ENCODE measurements at regions of chr5 and their contacts with region 1.

Region 1: GRCh38 chr5:132466433-132467286 is 23.9 kb downstream of the IRF1 start:
- DNase-seq: peak in 1 of 2 donors; percentile 55
- ATAC-seq: peak in 7 of 8 donors; percentile 29 to 62 (median 58)
- H3K4me3 ChIP-seq: peak overlapping the region in 2 of 10 donors; percentile 11 to 17
- H3K27ac ChIP-seq: peak overlapping the region in 9 of 10 donors; percentile 27 to 82 (median 67)
- H3K4me1 ChIP-seq: peaks cover 14 to 100% (median 83%) of the 10 kb centered on the region in 9 donors
- H3K27me3 ChIP-seq: no peaks in the 10 kb centered on the region
- CTCF ChIP-seq: no peak

Region 2: DNA sequence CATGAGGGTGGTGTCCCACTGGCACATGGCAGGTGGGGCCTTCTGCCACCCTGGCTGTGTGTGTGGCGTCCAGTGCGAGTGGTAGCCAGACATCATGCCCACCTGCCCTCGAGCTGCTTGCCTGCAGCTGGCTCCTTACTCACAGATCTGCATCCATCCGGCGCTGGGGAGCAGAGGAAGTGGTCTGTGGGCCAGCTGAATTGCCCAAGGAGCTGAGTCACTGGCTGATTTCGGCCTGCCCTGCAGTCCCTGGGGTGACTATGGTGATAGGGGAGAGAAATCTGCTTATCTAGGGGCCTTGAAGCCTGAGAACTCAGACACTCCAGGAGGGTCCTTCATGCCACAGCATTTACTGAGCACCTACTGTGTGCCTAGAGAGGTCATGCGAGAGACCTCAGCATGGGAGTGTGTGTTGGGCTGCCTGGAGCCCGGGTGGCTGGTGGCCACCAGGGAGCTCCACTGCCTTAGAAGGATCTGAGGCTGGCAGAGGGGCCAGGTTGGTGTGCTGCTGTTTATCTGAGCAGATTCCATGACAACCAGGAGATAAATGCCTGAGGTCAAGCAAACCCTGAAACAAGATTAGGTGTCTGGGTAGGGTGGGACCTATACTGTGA is 40.0 kb before region 1 on chr5:
- intact Hi-C with region 1: loop called in 2 of 10 experiments (anchors 5 kb)
- DNase-seq: peak; percentile 59 to 67
- ATAC-seq: peak; percentile 26 to 75 (median 48)
- H3K4me3 ChIP-seq: peak overlapping the region in 1 of 10 donors; percentile 32
- H3K27ac ChIP-seq: peak overlapping the region in 9 of 10 donors; percentile 64 to 100 (median 86)
- H3K4me1 ChIP-seq: peaks cover 58 to 100% (median 97%) of the 10 kb centered on the region in 9 donors
- H3K27me3 ChIP-seq: no peaks in the 10 kb centered on the region
- CTCF ChIP-seq: peak in 7 of 9 donors; percentile 5 to 50 (median 39)